ENCODE measurements at regions of chr2 and their contacts with region 1.

Region 1: DNA sequence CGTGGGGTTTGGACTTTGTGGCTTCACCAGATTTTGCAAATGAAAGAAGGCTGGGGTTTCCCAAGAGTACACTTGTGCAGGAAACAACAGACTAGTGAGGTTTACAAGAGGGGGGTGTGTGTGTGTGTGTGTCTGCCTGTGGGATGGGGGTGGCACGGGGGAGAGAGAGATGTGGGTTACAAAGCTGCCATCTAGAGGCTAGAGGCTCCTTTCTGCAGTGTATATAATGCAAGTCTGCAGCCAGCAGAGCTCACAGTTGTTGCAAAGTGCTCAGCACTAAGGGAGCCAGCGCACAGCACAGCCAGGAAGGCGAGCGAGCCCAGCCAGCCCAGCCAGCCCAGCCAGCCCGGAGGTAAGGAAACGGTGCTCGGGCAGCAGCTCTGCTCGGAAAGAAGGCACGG is at the start of gene ACKR3:
- DNase-seq: peak; percentile 72 to 87
- ATAC-seq: peak; percentile 78 to 84 (median 79)
- H3K4me3 ChIP-seq: peak within 1 kb of the TSS; percentile 65
- H3K27ac ChIP-seq: peak within 1 kb of the TSS; percentile 79
- H3K4me1 ChIP-seq: peaks cover 39% of the 10 kb centered on the region
- H3K27me3 ChIP-seq: no peaks in the 10 kb centered on the region
- CTCF ChIP-seq: peak; percentile 23
- total RNA-seq, gene ACKR3: 7.8 to 23.2 (median 13.7) TPM

Region 2: GRCh38 chr2:235716899-235717442 is 852.6 kb before region 1 on chr2:
- intact Hi-C with region 1: no loop called
- DNase-seq: no peak
- ATAC-seq: no peak
- H3K4me3 ChIP-seq: no peak overlapping the region
- H3K27ac ChIP-seq: no peak overlapping the region
- H3K4me1 ChIP-seq: no peaks in the 10 kb centered on the region
- H3K27me3 ChIP-seq: no peaks in the 10 kb centered on the region
- CTCF ChIP-seq: no peak

Region 3: GRCh38 chr2:236512902-236513435 is 56.6 kb before region 1 on chr2:
- intact Hi-C with region 1: loop called (anchors 2 to 5 kb)
- DNase-seq: peak; percentile 55 to 77
- ATAC-seq: peak; percentile 73 to 94 (median 89)
- H3K4me3 ChIP-seq: no peak overlapping the region
- H3K27ac ChIP-seq: no peak overlapping the region
- H3K4me1 ChIP-seq: no peaks in the 10 kb centered on the region
- H3K27me3 ChIP-seq: peaks cover 0 to 3% (median 2%) of the 10 kb centered on the region in 3 donors
- CTCF ChIP-seq: peak; percentile 78

Region 4: GRCh38 chr2:236582968-236583367 is 13.4 kb after region 1 on chr2:
- intact Hi-C with region 1: no loop called
- DNase-seq: peak in 1 of 2 donors; percentile 62
- ATAC-seq: no peak
- H3K4me3 ChIP-seq: no peak overlapping the region
- H3K27ac ChIP-seq: no peak overlapping the region
- H3K4me1 ChIP-seq: peaks cover 7% of the 10 kb centered on the region
- H3K27me3 ChIP-seq: no peaks in the 10 kb centered on the region
- CTCF ChIP-seq: no peak

Region 5: DNA sequence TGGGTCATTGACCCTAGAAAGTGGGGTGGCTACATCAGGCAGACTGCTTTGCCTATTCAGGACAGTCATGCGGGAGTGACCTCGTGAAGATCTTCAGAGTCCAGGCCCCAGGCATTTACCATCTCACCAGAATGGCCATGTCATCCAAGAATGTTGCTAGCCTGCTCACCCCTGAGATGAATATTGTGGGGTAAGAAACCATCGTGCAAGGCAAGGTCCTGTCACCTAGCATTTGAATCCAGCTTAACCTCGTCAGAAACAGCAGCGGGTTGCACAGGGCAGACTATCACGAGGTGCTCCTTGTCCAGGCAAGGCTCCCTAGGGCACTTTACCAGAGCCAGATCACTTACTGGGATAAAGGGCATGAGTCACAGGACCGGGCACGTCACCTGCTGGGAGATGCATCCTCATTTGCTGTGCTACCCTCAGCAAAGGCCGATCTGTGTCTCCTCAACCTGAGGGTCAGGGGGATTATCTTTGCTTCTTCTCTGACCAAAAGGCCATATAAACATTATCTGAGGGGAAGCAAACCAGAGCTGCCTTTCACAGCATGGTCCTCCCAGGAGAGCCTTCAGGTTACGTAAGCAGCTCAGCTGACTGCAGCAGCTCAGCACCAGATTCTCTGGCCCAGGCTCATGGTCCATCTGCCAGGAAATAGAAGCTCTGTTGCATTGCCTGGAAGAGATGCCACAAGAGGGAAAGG is 162.5 kb after region 1 on chr2:
- intact Hi-C with region 1: loop called in 1 of 2 experiments (anchors 5 kb)
- DNase-seq: peak; percentile 79 to 90
- ATAC-seq: peak; percentile 93 to 97 (median 94)
- H3K4me3 ChIP-seq: no peak overlapping the region
- H3K27ac ChIP-seq: peak overlapping the region; percentile 88
- H3K4me1 ChIP-seq: peaks cover 28% of the 10 kb centered on the region
- H3K27me3 ChIP-seq: no peaks in the 10 kb centered on the region
- CTCF ChIP-seq: no peak

Region 6: GRCh38 chr2:237026981-237027711 is 457.6 kb after region 1 on chr2:
- intact Hi-C with region 1: loop called in 1 of 2 experiments (anchors 5 kb)
- DNase-seq: peak; percentile 77 to 83
- ATAC-seq: peak; percentile 93 to 98 (median 94)
- H3K4me3 ChIP-seq: no peak overlapping the region
- H3K27ac ChIP-seq: no peak overlapping the region
- H3K4me1 ChIP-seq: no peaks in the 10 kb centered on the region
- H3K27me3 ChIP-seq: peaks cover 0 to 2% (median 0%) of the 10 kb centered on the region in 3 donors
- CTCF ChIP-seq: peak; percentile 93